ENCODE measurements at regions of chr1 and their contacts with region 1.

Region 1: DNA sequence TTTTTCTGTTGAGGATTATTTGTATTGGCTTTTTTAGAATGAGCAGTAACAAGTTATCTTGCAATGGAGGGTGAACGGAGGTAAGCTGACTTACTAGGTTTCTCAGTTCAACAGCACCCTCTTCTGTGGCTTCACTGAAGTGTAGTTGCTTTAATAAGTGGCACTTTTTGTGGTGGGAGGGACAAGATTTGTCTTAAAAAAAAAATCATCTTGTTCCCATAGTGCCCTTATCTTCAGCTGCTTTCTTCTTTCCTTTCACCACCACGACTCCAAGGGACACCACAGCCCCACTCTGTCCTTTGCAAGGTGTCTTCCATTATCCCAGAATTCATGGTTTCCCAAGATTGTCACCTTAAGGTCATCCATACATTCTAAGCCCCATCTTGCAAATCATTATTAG is 92.9 kb downstream of the PIGK start:
- DNase-seq: peak; percentile 73
- ATAC-seq: peak; percentile 86
- H3K4me3 ChIP-seq: no peak overlapping the region
- H3K27ac ChIP-seq: no peak overlapping the region
- H3K4me1 ChIP-seq: no peaks in the 10 kb centered on the region
- H3K27me3 ChIP-seq: no peaks in the 10 kb centered on the region
- CTCF ChIP-seq: peak; percentile 57 to 76 (median 73); a peak in 5 of 6 replicates
- POLR2A ChIP-seq: no peak
- RAD21 ChIP-seq: peak; percentile 92

Region 2: GRCh38 chr1:75908717-75909152 is 1217.6 kb before region 1 on chr1:
- CTCF ChIA-PET with region 1: interaction called, 7 read pairs
- POLR2A ChIA-PET with region 1: no interaction called
- RAD21 ChIA-PET with region 1: no interaction called
- intact Hi-C with region 1: loop called (anchors 5 kb)
- DNase-seq: peak; percentile 40
- ATAC-seq: peak; percentile 95
- H3K4me3 ChIP-seq: no peak overlapping the region
- H3K27ac ChIP-seq: no peak overlapping the region
- H3K4me1 ChIP-seq: no peaks in the 10 kb centered on the region
- H3K27me3 ChIP-seq: no peaks in the 10 kb centered on the region
- CTCF ChIP-seq: peak; percentile 44 to 71 (median 61); a peak in 5 of 6 replicates
- POLR2A ChIP-seq: no peak
- RAD21 ChIP-seq: peak; percentile 86

Region 3: GRCh38 chr1:75991497-75992114 is 1134.7 kb before region 1 on chr1:
- CTCF ChIA-PET with region 1: no interaction called
- POLR2A ChIA-PET with region 1: no interaction called
- RAD21 ChIA-PET with region 1: no interaction called
- intact Hi-C with region 1: loop called (anchors 1 kb)
- DNase-seq: peak; percentile 75
- ATAC-seq: peak; percentile 93
- H3K4me3 ChIP-seq: no peak overlapping the region
- H3K27ac ChIP-seq: no peak overlapping the region
- H3K4me1 ChIP-seq: no peaks in the 10 kb centered on the region
- H3K27me3 ChIP-seq: peaks cover 12% of the 10 kb centered on the region
- CTCF ChIP-seq: peak; percentile 66 to 87 (median 75)
- POLR2A ChIP-seq: no peak
- RAD21 ChIP-seq: peak; percentile 83

Region 4: GRCh38 chr1:76330991-76331603 is 795.2 kb before region 1 on chr1:
- CTCF ChIA-PET with region 1: interaction called, 4 read pairs
- POLR2A ChIA-PET with region 1: no interaction called
- RAD21 ChIA-PET with region 1: no interaction called
- intact Hi-C with region 1: loop called (anchors 1 kb)
- DNase-seq: peak; percentile 63
- ATAC-seq: peak; percentile 82
- H3K4me3 ChIP-seq: no peak overlapping the region
- H3K27ac ChIP-seq: no peak overlapping the region
- H3K4me1 ChIP-seq: peaks cover 0 to 3% of the 10 kb centered on the region in 2 experiments; a peak in 1 of 4 replicates
- H3K27me3 ChIP-seq: no peaks in the 10 kb centered on the region
- CTCF ChIP-seq: peak; percentile 39 to 97 (median 90); a peak in 5 of 6 replicates
- POLR2A ChIP-seq: no peak
- RAD21 ChIP-seq: peak; percentile 73

Region 5: DNA sequence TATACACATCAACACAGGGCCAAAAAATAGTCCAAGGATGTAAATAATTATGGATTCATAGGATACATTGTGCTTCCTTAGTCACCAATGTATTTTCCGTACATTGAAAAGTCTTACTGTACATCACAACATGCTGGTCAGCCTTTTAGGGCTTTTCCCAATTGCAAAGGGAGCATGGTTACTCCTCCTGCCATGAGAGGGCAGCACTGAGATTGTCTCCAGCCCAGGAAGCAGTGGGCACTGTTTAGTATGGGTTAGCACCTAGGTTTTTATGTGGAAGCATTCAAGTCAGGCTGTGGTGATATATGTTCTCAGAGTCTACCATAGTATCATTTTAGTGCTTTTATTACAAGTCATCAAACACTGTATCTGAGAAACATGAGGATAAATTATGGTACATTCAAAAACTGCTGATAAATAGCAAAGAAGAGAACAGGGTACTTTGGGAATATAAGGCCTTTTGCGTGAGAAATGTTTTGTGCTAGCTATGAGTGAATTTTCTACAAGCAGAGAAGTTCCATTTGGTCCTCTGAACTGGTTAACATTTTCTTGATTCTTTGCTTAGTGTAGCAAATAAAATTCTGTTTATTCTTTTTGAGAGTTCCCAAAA is 225.0 kb before region 1 on chr1:
- CTCF ChIA-PET with region 1: no interaction called
- POLR2A ChIA-PET with region 1: no interaction called
- RAD21 ChIA-PET with region 1: no interaction called
- intact Hi-C with region 1: loop called (anchors 1 kb)
- DNase-seq: peak; percentile 54
- ATAC-seq: peak; percentile 100
- H3K4me3 ChIP-seq: no peak overlapping the region
- H3K27ac ChIP-seq: no peak overlapping the region
- H3K4me1 ChIP-seq: no peaks in the 10 kb centered on the region
- H3K27me3 ChIP-seq: no peaks in the 10 kb centered on the region
- CTCF ChIP-seq: peak; percentile 50 to 90 (median 86); a peak in 5 of 6 replicates
- POLR2A ChIP-seq: no peak
- RAD21 ChIP-seq: peak; percentile 69

Measured in HCT116 (cell line).